ENCODE measurements at regions of chr17 and their contacts with region 1.

Region 1: DNA sequence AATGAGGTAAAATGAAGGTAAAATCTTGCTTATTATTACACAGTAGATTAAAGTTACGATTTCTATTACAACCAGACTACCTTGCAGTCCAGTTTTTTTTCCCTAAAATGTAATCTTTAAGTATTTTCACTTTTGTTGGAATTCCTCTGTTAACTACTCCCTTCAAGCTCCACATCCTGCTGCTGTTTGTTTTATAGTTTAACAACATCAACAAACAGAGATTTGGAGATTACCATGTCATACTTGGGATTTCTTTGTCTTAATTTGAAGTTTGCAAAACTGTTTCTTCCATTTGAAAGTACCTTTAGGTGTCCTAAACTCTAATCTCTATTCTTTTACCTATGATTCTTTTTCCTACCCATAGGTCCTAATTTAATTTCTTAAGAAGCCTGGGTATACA is 83.3 kb downstream of the ABHD15 start:
- DNase-seq: no peak
- ATAC-seq: no peak
- H3K4me3 Mint-ChIP-seq: no peak overlapping the region
- H3K27ac Mint-ChIP-seq: no peak overlapping the region
- H3K4me1 Mint-ChIP-seq: no peaks in the 10 kb centered on the region
- H3K27me3 Mint-ChIP-seq: no peaks in the 10 kb centered on the region

Region 2: GRCh38 chr17:29461483-29462206 is 21.9 kb before region 1 on chr17:
- CTCF ChIA-PET with region 1: interaction called, 3 read pairs
- POLR2A ChIA-PET with region 1: no interaction called
- intact Hi-C with region 1: loop called in 1 of 2 experiments (anchors 1 kb)
- DNase-seq: no peak
- ATAC-seq: no peak
- H3K4me3 Mint-ChIP-seq: no peak overlapping the region
- H3K27ac Mint-ChIP-seq: peak overlapping the region; percentile 0
- H3K4me1 Mint-ChIP-seq: peaks cover 7% of the 10 kb centered on the region
- H3K27me3 Mint-ChIP-seq: no peaks in the 10 kb centered on the region